ENCODE measurements at regions of chr2 and their contacts with region 1.

Region 1: DNA sequence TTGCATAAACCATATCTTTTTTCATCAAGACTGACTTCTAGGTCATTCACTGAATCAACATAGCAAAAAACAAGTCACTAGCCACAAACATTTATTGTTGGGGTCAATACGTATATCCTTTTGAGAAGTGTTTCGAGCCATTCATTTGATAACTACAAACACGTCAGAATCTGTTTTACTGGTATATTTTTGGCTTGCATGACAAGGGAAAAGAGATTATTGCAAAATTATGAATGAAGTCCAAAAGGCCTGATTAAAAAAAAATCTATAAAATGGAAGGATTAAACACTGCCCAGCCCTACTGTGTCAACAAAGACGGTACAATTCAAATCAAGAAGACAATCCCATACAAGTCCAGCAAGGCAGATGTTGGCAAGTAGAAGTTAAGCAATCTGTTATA is 222.5 kb downstream of the SRBD1 start:
- DNase-seq: no peak

Region 2: DNA sequence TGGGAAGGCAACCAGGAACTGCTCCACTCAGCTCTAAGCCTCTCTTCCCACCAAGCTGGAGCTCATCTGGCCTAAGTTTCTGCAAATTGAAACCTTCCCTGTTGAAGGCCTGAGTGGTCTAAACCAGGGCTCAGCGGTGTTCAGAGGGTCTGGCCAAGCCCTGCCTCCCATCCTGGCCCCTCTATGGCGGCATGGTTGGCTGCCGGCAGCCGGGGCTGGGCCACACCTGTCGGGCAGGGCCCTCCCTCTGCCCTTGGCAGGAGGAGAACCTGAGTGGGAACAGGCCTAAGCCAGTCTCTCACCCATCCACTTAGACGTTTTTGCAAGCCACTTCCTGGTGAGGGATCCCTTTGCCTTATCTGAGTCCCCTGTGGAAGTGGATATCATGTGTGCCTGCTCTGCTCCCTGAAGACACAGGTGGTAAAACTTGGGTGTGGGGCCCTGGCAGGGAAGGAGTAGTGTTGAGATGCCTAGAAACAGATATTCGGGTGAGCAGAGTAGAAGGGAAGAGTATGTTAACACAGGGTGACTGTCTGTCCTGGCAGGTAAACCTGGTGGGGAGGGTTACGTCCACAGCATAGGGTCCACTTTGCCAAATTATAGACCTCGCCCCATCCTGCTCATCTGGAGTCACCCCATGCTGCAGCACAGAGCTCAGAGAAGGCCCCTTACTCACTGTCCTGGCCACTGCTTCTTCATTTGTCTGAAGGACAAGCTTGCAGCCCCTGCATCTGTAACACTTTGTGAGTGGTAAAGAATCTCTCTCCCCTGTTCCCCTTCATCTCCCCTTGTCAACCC is 316.3 kb before region 1 on chr2:
- in situ Hi-C with region 1: no loop called
- DNase-seq: no peak

Region 3: GRCh38 chr2:45422921-45423320 is 34.3 kb after region 1 on chr2:
- in situ Hi-C with region 1: loop called (anchors 5 kb)
- DNase-seq: no peak